Endothelial cell of umbilical vein (primary cell): ENCODE measurements at regions of chr9 and their contacts with region 1.

Region 1: DNA sequence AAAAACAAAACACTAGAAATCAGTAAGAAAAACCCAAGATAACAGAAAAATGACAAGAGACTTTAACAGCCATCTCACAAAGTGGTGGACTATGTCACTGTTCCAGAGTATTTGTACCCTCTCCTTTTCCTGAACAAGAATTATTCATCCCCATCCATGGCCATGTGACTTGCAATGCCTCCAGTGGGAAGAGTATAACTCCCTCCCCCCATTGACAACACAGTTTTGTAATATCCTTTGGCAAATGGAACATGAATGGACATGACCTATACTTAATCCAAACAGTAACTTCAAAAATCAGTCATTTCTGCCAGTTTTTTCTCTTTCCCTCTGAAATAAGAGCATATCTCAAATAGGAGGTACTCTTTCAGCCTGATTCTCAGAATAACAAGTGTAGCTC is 33.9 kb downstream of the PTBP3 start:
- DNase-seq: peak; percentile 76
- H3K4me3 ChIP-seq: no peak overlapping the region
- H3K27ac ChIP-seq: peak overlapping the region; percentile 26
- H3K4me1 ChIP-seq: peaks cover 12% of the 10 kb centered on the region
- H3K27me3 ChIP-seq: no peaks in the 10 kb centered on the region
- CTCF ChIP-seq: no peak
- POLR2A ChIP-seq: no peak

Region 2: DNA sequence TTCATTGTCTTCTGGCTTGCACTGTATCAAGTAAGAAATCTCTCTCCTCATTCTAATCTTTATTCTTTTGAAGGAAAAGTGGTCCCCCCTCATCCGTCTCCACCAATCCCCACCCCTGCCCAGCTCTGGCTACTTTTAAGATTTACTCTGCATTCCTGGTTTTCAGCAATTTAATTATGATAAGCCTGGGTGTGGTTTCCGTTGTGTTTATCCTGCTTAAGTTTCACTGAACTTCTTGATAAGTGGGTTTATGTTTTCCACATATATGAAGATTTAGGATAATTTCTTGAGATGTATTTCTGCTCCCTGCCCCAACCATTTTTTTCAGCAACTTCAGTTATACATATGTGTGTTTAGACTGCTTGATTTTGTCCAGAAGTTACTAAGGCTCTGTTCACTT is 12.6 kb before region 1 on chr9:
- CTCF ChIA-PET with region 1: interaction called, 4 read pairs
- POLR2A ChIA-PET with region 1: interaction called, 11 read pairs
- dilution Hi-C with region 1: no loop called
- intact Hi-C with region 1: no loop called
- DNase-seq: no peak
- H3K4me3 ChIP-seq: no peak overlapping the region
- H3K27ac ChIP-seq: no peak overlapping the region
- H3K4me1 ChIP-seq: no peaks in the 10 kb centered on the region
- H3K27me3 ChIP-seq: no peaks in the 10 kb centered on the region
- CTCF ChIP-seq: no peak
- POLR2A ChIP-seq: no peak